Cardiac septum (tissue), 1 donor: ENCODE measurements at regions of chr4 and their contacts with region 1.

Region 1: DNA sequence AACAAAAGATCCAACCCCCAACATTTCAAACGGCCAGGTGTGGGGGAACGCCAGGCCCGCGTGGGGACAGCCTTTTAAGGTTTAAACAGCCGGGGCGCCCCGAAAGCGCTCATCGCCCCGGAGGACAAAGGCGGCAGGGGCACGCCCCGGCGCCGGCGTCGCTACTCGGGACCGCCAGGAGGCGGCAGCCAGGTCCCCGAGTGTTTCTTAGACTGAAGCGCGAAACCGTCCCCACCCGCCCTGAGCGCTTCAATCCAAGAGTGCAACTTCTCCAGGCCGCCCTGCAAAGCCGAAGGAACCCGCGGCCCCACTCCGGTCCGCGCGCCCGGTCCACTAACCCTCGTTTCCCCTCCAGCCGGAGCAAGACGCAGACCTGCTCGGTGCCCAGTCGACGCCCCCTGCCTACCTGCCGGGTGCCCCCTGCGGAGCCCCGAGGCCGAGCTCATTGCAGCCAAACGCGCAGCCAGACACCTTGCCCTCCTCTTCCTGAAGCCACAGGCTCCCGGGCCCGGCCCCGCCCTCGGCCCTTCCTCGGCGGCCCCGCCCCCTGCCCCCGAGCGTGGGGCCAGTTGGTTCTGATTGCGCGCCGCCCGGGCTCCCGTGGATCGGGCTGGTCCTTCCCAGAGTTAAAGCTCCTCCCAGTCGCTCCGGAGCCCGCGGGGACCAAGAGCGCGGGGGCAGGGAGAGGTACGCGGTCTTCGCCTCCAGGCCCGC is at the start of gene CASP6:
- DNase-seq: peak; percentile 93
- total RNA-seq, gene CASP6: 3.8 TPM

Region 2: DNA sequence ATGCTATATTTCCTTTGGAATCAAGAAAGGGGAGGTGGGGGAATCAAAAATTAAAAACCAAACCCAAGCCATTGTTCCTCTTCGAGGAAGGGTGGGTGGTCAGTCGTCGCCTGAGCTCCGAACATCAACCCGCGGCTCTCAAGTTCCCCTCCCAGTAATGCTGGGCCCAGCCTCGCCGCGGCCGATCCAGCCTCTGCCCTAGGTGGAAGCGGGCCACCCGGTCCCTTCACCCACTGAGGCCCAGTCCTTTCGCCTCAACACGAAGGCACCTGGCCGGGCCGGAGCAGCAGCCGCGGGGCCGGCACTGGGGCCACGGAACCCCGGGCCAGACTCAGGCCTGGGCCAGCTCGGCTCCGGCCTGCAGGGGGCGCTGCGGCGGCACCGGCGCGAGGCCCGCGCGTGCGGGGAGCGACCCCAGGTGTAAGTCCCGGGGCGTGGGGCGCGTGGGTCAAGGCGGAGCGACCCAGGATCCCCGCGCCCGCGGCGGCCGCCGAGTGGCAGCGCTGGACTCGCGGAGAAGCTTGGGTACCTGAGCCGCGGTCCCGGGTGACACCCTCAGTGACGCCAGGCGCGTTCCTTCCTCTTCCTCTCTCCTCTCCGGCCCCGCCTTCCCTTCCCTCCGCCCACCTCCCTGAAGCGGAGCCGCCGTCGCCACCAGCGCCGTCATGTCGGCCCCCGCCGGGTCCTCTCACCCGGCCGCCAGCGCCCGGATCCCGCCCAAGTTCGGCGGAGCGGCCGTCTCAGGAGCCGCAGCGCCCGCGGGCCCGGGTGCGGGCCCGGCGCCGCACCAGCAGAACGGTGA is 269.7 kb before region 1 on chr4 and contains the start of gene SEC24B:
- intact Hi-C with region 1: loop called (anchors 1 kb)
- DNase-seq: peak; percentile 97
- total RNA-seq, gene SEC24B: 26.6 TPM

Region 3: DNA sequence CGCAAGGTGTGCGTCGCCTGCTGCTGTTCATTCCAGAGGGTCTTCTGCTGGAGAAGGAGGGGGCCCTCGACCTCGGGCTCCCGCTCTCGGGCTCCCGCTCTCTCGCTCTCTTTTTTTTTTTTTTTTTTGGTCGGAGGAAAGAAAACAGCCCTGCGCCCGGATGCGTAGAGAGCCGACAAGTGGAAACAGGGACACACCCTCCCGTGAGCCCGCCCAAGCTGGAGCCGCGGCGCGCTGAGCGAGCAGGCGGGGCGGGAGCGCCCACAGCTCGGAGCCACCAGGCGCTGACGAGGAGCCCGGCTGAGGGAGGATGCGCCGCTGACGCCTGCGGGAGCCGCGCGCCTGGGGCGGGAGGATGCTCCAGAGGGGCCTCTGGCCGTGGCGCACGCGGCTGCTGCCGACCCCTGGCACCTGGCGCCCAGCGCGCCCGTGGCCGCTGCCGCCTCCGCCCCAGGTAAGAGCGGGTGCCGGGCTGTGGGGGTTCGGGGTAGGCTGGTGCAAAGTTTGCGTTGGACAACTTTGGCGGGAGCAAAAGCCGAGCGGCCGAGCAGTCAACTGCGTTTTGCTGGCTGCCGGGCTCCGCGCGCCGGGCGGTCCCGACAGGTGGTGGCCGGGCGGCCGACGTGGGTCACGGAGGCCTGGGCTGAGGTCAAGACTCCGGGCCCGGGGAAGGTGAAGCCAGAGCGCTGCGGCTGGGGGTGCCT is 143.0 kb before region 1 on chr4 and contains the start of gene MCUB:
- intact Hi-C with region 1: loop called (anchors 1 kb)
- DNase-seq: peak; percentile 92
- total RNA-seq, gene MCUB: 6.6 TPM

Region 4: GRCh38 chr4:109977854-109978501 is 274.9 kb after region 1 on chr4:
- intact Hi-C with region 1: loop called (anchors 10 kb)
- DNase-seq: no peak